ENCODE measurements at regions of chr1 and their contacts with region 1.

Region 1: DNA sequence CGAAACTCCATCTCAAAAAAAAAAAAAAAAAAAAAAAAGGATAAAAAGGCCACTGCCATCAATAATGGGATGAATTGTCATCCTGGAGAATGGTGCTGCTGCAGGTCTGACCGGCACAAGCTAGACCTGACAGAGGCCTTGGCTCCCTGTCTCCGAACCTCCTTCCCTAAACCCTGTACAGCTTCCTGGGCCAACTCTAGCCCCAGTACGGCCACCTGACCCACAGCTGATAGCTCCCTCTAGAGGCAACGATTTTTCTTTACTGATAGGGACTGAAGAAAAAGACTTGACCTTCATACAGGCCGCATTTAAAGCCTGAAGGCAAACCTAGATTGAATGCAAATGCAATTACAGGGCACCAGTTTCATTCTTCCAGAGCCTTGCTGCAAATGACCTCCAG is 30.7 kb downstream of the NOL9 start:
- DNase-seq: no peak
- H3K4me3 ChIP-seq: no peak overlapping the region
- H3K27ac ChIP-seq: peak overlapping the region; percentile 33
- H3K4me1 ChIP-seq: peaks cover 17% of the 10 kb centered on the region
- H3K27me3 ChIP-seq: no peaks in the 10 kb centered on the region
- CTCF ChIP-seq: peak; percentile 67

Region 2: DNA sequence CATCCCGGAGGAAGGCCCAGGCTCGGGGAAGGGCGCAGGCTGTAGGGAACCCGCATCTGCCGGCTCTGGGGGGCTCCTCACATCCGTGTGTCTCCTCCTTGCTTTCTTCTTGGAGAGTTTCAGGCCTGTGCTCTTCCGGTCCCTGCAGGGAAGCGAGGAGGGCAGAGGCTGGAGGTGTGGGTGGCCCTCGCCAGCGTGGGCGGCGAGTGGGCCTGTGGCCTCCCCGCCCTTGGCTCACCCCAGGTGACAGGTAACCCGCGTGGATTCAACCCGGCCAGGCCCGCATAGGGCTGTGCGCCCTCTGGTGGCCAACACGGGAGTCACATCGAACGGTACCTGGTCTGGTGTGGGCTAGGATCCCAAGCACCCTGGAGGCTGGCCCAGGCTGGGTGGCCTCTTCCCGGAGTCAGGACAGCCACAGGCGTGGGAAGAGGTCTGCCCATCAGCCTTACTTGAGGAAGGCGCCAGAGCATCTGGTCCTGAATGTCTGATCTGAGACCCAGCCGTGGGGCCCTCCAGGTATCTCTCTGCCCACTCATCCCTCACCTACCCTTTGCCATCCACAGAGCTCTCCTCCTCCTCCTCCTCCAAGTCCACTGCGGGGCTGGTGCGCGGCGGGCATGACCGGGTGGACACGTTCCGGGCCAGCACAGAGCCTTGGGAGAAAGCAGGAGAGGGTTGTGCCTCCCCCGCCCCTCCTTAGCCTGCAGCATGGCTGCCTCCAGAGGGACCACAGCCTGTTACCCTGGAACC is 48.0 kb before region 1 on chr1:
- intact Hi-C with region 1: loop called (anchors 10 kb)
- DNase-seq: peak; percentile 57
- H3K4me3 ChIP-seq: no peak overlapping the region
- H3K27ac ChIP-seq: no peak overlapping the region
- H3K4me1 ChIP-seq: peaks cover 10% of the 10 kb centered on the region
- H3K27me3 ChIP-seq: no peaks in the 10 kb centered on the region
- CTCF ChIP-seq: peak; percentile 93

Region 3: GRCh38 chr1:7042322-7043190 is 519.0 kb after region 1 on chr1:
- intact Hi-C with region 1: no loop called
- DNase-seq: no peak
- H3K4me3 ChIP-seq: no peak overlapping the region
- H3K27ac ChIP-seq: no peak overlapping the region
- H3K4me1 ChIP-seq: no peaks in the 10 kb centered on the region
- H3K27me3 ChIP-seq: peaks cover 53% of the 10 kb centered on the region
- CTCF ChIP-seq: peak; percentile 60